Posterior vena cava (tissue), 2 donors: ENCODE measurements at regions of chr19 and their contacts with region 1.

Region 1: GRCh38 chr19:27922970-27923369 is 1290.0 kb downstream of the UQCRFS1 start:
- DNase-seq: no peak

Region 2: DNA sequence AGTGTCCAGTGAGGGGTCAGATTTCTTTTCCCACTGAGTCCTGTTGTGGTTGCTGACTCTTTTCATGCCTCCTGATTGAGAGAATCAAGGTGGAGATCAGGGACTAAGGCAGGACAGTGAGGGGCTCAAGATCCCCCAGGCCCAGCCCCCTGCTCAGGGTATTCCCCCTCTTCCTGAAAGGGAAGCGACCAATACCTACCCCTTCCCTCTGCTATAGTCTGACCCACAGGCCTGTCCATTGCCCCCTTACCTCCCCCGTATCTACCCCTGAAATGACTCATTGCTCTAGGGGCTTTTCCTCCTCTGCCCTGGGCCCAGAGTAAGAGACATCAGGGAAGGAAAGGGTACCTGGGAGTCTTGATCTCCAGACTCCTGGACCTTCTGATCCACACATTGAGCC is 30.5 kb before region 1 on chr19:
- intact Hi-C with region 1: loop called in 1 of 2 experiments (anchors 2 kb)
- DNase-seq: no peak